ENCODE measurements at regions of chr3 and their contacts with region 1.

Region 1: GRCh38 chr3:179260949-179261765 is 10.2 kb upstream of the KCNMB3 start:
- DNase-seq: peak; percentile 4
- H3K4me3 ChIP-seq: peak overlapping the region; percentile 57
- H3K27ac ChIP-seq: no peak overlapping the region
- H3K27me3 ChIP-seq: peaks cover 3% of the 10 kb centered on the region
- CTCF ChIP-seq: no peak

Region 2: GRCh38 chr3:179278932-179279693 is 18.0 kb after region 1 on chr3:
- CTCF ChIA-PET with region 1: no interaction called
- POLR2A ChIA-PET with region 1: interaction called, 10 read pairs
- DNase-seq: no peak
- H3K4me3 ChIP-seq: no peak overlapping the region
- H3K27ac ChIP-seq: no peak overlapping the region
- H3K27me3 ChIP-seq: peaks cover 4% of the 10 kb centered on the region
- CTCF ChIP-seq: no peak

Region 3: GRCh38 chr3:179309225-179310078 is 48.3 kb after region 1 on chr3:
- CTCF ChIA-PET with region 1: no interaction called
- POLR2A ChIA-PET with region 1: no interaction called
- DNase-seq: no peak
- H3K4me3 ChIP-seq: no peak overlapping the region
- H3K27ac ChIP-seq: no peak overlapping the region
- H3K27me3 ChIP-seq: no peaks in the 10 kb centered on the region
- CTCF ChIP-seq: no peak